MCF 10A (cell line): ENCODE measurements at regions of chr1 and their contacts with region 1.

Region 1: DNA sequence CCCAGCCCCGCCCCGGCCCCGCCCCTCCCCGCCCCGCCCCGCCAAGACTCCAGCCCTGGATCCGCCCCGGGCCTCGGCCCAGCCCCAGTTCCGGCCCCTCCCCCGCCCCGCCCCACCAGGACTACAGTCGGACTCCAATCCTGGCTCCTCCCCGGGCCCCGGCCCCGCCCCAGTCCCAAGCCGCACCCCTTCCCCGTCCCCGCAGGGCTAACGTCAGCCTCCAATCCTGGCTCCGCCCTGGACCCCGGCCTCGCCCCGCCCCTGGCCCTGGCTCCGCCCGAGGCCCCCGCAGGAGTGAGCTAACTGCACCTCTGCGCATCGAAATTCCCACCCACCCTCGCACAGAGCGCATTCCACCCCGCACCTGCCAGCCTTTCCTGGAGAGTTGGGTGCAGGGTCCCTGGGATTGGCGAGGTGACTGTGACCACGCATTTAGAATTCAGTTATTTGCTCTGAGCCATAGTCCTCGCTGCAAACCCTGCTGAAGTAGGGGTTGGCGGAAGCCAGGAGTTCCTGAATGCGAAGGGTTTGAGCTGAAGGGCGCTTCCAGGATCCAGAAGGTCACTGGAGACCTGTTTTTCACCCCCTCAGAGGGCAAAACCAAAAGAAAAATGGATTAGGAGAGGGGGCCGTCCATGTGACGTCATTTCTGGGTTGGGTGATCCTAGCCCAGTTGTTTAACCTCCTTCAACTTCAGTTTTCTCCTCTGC is 588 bp upstream of the IGSF8 start:
- DNase-seq: peak; percentile 96
- H3K4me3 Mint-ChIP-seq: peak overlapping the region; percentile 81
- H3K27ac Mint-ChIP-seq: no peak overlapping the region
- H3K4me1 Mint-ChIP-seq: peaks cover 36% of the 10 kb centered on the region
- H3K27me3 Mint-ChIP-seq: no peaks in the 10 kb centered on the region
- CTCF ChIP-seq: no peak

Region 2: DNA sequence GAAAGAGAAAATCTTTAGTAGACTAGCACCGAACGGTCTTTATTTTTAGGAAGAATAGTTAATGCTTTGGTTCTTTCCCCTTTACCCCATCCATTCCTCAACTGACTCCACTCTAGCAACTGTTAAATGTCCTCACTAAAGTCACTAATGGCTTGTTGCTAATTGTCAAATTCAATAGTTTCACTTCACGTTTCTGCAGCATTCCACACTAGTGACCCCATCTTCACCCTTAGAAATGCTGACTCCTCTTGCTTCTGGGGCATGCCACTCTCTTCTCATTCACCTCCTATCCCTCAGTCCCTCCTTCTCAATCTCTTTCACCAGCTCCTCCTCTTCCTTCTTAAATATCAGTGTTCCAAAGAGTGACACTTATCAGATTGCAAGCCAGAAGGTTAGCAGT is 947.0 kb before region 1 on chr1:
- CTCF ChIA-PET with region 1: no interaction called
- POLR2A ChIA-PET with region 1: no interaction called
- intact Hi-C with region 1: no loop called
- DNase-seq: no peak
- H3K4me3 Mint-ChIP-seq: no peak overlapping the region
- H3K27ac Mint-ChIP-seq: no peak overlapping the region
- H3K4me1 Mint-ChIP-seq: peaks cover 7% of the 10 kb centered on the region
- H3K27me3 Mint-ChIP-seq: peaks cover 12% of the 10 kb centered on the region
- CTCF ChIP-seq: no peak

Region 3: GRCh38 chr1:160046494-160047110 is 52.4 kb before region 1 on chr1:
- CTCF ChIA-PET with region 1: interaction called, 1,546 read pairs
- POLR2A ChIA-PET with region 1: interaction called, 13 read pairs
- intact Hi-C with region 1: no loop called
- DNase-seq: peak; percentile 73
- H3K4me3 Mint-ChIP-seq: no peak overlapping the region
- H3K27ac Mint-ChIP-seq: no peak overlapping the region
- H3K4me1 Mint-ChIP-seq: peaks cover 16% of the 10 kb centered on the region
- H3K27me3 Mint-ChIP-seq: peaks cover 63% of the 10 kb centered on the region
- CTCF ChIP-seq: peak; percentile 83

Region 4: DNA sequence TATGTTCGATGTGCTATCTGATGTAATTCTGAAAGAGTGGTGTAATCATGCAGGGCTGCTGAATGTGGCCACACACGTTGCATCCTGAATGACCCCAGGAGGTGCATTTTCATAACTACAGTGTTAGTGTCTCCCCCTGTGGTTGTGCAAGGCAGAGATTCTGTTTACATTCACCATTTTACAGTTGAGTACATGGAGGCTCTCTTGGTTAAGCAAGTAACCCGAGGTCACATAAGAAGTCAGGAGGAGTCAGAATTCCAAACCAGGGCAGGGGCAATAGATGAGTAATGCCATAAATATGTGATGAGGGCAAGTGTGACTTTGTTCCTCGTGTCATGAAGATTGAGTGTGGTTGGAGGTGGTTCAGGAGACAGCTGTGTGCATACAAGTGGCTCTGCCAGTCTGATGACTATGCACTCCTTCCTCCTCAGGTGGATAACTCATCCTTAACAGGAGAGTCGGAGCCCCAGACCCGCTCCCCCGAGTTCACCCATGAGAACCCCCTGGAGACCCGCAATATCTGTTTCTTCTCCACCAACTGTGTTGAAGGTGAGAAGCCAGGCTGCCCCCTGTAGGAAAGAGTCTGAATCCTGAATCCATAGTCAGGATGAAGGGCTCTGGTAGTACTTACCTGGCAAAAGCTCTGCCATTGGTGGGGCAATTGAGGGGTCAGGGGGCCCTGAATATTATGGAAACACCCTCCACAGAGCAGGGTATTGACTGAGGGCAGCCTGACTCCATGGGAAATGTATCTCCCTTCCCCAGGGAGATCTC is 25.9 kb after region 1 on chr1:
- CTCF ChIA-PET with region 1: interaction called, 69 read pairs
- POLR2A ChIA-PET with region 1: interaction called, 16 read pairs
- intact Hi-C with region 1: no loop called
- DNase-seq: peak; percentile 94
- H3K4me3 Mint-ChIP-seq: no peak overlapping the region
- H3K27ac Mint-ChIP-seq: peak overlapping the region; percentile 93
- H3K4me1 Mint-ChIP-seq: peaks cover 41% of the 10 kb centered on the region
- H3K27me3 Mint-ChIP-seq: no peaks in the 10 kb centered on the region
- CTCF ChIP-seq: peak; percentile 36

Region 5: DNA sequence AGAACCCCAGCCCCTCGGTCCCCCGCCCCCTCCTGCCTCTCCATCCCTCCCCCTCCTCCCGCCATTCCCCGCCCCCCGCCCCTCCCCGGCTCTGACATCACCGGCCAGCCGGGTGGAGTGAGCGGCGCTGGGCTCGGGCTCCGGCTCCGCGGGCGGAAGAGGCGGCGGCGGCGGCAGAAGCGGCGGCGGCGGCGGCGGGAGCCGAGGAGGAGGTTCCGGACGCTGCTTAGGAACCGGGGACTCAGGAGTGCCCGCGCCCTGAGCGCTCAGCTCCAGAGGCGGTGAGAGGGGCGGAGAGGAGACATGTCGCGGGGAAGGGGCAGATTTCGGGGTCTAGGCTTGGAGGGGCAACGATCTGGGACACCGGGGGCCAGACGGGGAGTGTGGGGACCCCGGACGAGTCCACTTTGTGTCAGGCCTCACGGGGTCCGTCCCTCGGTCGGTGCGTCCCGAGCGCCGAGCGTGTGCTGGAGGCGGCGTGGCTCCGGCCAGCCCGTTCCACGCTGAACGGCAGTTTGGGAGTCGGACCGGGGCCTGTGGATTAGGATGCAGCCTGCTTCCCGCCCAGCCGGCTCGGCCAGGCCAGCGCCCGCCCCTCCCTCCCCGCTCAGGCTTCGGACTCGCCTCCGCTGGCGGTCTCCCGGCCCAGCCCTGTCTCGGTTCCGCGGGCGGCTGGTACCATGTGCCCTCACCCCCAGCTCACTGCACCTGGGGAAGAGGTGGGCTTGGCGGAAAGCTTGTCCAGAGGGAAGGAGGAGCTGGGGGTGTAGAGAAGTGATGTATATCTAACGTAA is 106.4 kb after region 1 on chr1 and contains the start of gene PEA15:
- CTCF ChIA-PET with region 1: interaction called, 33 read pairs
- POLR2A ChIA-PET with region 1: interaction called, 23 read pairs
- intact Hi-C with region 1: no loop called
- DNase-seq: peak; percentile 75
- H3K4me3 Mint-ChIP-seq: peak within 1 kb of the TSS; percentile 82
- H3K27ac Mint-ChIP-seq: peak within 1 kb of the TSS; percentile 17
- H3K4me1 Mint-ChIP-seq: peaks cover 25% of the 10 kb centered on the region
- H3K27me3 Mint-ChIP-seq: no peaks in the 10 kb centered on the region
- CTCF ChIP-seq: no peak
- total RNA-seq, gene PEA15: 183 and 198 TPM in 2 replicates

Region 6: DNA sequence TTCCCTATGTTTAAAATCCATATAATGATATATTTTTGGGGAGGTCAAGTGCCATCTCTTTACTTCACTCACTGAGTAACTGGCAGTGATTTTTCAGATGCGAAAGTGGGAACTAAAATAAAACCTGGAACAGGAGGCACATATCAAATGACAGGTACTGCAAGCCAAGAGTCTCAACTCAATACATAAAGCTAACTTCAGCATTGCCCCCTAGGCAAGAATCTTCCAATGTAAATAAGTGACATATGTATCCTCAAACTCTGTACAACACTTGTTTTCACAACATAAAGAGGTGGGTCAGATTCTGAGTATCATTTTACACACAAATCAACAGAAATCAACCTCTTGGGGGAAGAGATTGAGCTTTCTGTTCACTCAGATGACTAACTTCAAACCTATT is 145.2 kb after region 1 on chr1:
- CTCF ChIA-PET with region 1: interaction called, 187 read pairs
- POLR2A ChIA-PET with region 1: interaction called, 15 read pairs
- intact Hi-C with region 1: no loop called
- DNase-seq: no peak
- H3K4me3 Mint-ChIP-seq: no peak overlapping the region
- H3K27ac Mint-ChIP-seq: no peak overlapping the region
- H3K4me1 Mint-ChIP-seq: peaks cover 7% of the 10 kb centered on the region
- H3K27me3 Mint-ChIP-seq: no peaks in the 10 kb centered on the region
- CTCF ChIP-seq: no peak

Region 7: DNA sequence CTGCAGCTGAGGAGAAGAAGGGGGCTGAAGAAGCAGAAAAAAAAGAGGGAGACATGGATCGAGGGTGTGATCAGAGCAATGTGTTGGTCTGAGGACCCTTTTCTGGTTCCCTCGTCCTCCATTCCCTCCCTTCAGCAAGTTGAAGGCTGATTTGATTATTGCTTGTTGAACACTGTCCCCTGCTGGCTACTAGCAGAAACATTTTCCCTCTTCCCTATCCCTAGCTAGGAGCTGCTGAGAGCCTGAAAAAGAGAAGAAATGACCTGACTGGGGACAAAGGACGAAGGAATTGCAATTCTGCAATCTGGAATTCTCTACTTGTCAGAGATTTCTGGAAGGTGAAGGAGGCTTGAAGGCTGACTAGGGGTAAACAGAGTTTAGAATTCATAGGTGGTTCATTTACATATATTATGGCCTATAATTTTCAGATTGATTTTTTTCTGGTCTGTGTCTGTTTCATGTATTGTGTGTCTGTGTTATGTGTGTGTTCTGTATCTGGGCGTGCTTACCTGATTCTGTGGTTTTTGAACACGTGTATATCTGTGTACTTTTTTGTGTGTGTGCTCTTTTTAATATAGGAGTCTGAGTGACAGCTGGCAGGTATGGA is 277.6 kb after region 1 on chr1:
- CTCF ChIA-PET with region 1: interaction called, 9 read pairs
- POLR2A ChIA-PET with region 1: interaction called, 3 read pairs
- intact Hi-C with region 1: loop called (anchors 1 kb)
- DNase-seq: peak; percentile 81
- H3K4me3 Mint-ChIP-seq: no peak overlapping the region
- H3K27ac Mint-ChIP-seq: no peak overlapping the region
- H3K4me1 Mint-ChIP-seq: peaks cover 13% of the 10 kb centered on the region
- H3K27me3 Mint-ChIP-seq: peaks cover 19% of the 10 kb centered on the region
- CTCF ChIP-seq: peak; percentile 98